Breast epithelium (tissue), 4 donors: ENCODE measurements at regions of chr18 and their contacts with region 1.

Region 1: DNA sequence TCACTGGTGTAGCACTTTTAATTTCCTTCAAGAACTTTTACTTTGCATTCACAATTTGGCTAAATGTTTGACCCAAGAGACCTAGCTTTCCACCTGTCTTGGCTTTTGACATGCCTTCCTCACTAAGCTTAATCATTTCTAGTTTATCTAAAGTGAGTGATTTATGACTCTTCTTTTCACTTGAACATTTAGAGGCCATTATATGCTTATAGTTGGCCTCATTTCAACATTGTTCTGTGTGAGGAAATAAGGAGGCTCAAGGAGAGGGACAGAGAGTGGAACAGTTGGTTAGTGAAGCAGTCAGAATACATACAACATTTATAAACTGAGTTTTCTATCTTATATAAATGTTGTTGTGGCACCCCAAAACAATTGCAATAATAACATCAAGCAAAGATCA is 489.3 kb upstream of the CDH2 start:
- DNase-seq: no peak
- H3K4me3 ChIP-seq: no peak overlapping the region
- H3K27ac ChIP-seq: no peak overlapping the region
- H3K4me1 ChIP-seq: no peaks in the 10 kb centered on the region
- H3K27me3 ChIP-seq: no peaks in the 10 kb centered on the region
- CTCF ChIP-seq: no peak
- POLR2A ChIP-seq: no peak

Region 2: DNA sequence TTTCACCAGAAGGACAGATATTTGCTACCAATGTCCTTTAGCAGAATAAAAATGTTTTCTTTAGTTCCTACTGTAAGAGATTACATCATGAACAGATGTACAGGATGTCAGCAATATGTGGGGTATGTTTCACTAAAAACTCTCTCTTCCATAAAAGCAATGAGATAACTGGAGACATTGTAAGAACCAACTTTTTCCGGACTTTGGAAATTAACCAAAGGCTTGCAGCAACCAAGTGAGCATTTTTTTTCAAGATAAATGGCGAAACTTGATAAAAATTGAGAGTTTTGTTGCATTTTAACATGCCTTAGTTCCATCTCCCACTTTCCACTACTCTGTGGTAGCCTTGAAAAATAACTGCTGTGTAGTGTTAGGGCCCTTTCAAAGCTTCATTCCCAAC is 59.5 kb before region 1 on chr18:
- intact Hi-C with region 1: loop called (anchors 2 kb)
- DNase-seq: no peak
- H3K4me3 ChIP-seq: no peak overlapping the region
- H3K27ac ChIP-seq: no peak overlapping the region
- H3K4me1 ChIP-seq: no peaks in the 10 kb centered on the region
- H3K27me3 ChIP-seq: no peaks in the 10 kb centered on the region
- CTCF ChIP-seq: no peak
- POLR2A ChIP-seq: no peak

Region 3: GRCh38 chr18:30072609-30073385 is 1406.6 kb after region 1 on chr18:
- intact Hi-C with region 1: no loop called
- DNase-seq: no peak
- H3K4me3 ChIP-seq: no peak overlapping the region
- H3K27ac ChIP-seq: no peak overlapping the region
- H3K4me1 ChIP-seq: no peaks in the 10 kb centered on the region
- H3K27me3 ChIP-seq: no peaks in the 10 kb centered on the region
- CTCF ChIP-seq: no peak
- POLR2A ChIP-seq: no peak